Caco-2 (cell line): ENCODE measurements at regions of chr4 and their contacts with region 1.

Region 1: DNA sequence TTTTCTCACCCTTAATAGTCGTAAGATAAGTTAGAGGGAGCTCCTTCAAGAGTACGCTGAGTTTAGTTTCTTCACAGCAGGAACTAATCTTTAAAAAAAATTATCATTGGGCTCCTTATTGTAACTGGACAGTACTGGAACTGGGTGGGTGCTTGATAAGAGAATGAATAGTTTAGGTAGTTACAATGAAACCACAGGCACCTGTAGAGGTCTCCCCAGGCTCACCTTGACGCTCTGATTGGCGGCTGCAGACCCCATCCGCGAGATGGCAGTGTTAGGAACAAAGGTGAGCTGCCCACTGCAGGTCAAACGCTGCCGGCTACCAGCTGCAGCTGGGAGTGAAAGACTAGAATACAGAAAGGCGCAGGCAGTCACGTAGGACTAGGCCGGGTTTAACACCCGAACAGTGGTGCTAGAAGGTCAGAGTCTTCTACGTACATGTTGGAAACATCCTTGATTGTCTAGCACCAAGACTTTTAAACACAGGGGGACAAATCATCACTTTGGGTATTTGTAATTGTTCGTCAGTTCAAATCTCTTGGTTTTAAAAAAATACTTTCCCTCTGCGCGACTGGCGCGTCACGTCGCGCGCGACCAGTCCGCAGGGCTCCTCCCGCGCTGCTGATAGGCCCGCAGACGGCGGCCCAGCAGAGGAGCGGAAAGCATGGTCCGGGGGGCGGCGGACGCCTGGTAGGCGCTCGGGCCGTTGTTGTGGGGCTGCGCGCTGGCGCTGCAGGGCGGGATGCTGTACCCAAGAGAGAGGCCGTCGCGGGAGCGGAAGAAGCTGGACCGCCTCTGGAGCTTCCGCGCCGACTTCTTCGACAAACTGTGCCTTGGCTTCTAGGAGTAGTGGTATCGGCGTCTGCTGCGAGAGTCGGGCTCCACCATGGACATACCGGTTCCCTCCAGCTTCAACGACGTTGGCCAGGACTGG is 45.6 kb downstream of the SMARCA5 start:
- DNase-seq: peak; percentile 91 to 92
- H3K4me3 ChIP-seq: peak overlapping the region; percentile 39
- H3K4me3 Mint-ChIP-seq: peak overlapping the region; percentile 81
- H3K27ac Mint-ChIP-seq: peak overlapping the region; percentile 90
- H3K4me1 ChIP-seq: no peaks in the 10 kb centered on the region
- H3K4me1 Mint-ChIP-seq: no peaks in the 10 kb centered on the region
- H3K27me3 ChIP-seq: no peaks in the 10 kb centered on the region
- H3K27me3 Mint-ChIP-seq: no peaks in the 10 kb centered on the region
- CTCF ChIP-seq: peak; percentile 60 to 94

Region 2: DNA sequence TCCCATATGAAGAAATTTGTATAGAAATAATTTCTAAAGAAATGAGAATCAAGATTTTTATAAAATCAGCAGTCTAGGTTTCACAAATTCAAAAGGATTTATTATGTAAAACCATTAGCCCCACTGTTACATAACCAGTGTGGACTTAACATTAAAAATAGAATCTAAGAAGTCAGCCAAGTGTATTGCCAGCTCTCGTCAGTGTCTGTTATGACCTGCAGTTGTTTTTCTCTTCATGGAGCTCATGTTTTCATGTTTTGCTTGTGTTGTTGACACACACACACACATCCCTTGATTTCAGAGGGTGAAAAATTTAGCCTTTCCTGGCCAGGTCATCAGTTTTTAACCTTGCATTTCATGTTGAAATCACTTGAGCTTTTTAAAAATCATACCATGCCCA is 334.8 kb before region 1 on chr4:
- CTCF ChIA-PET with region 1: no interaction called
- POLR2A ChIA-PET with region 1: no interaction called
- intact Hi-C with region 1: loop called (anchors 1 kb)
- DNase-seq: peak in 1 of 2 experiments; percentile 2
- H3K4me3 ChIP-seq: no peak overlapping the region
- H3K4me3 Mint-ChIP-seq: peak overlapping the region; percentile 62
- H3K27ac Mint-ChIP-seq: peak overlapping the region; percentile 94
- H3K4me1 ChIP-seq: peaks cover 49% of the 10 kb centered on the region
- H3K4me1 Mint-ChIP-seq: peaks cover 20% of the 10 kb centered on the region
- H3K27me3 ChIP-seq: no peaks in the 10 kb centered on the region
- H3K27me3 Mint-ChIP-seq: no peaks in the 10 kb centered on the region
- CTCF ChIP-seq: no peak

Region 3: GRCh38 chr4:143513306-143514168 is 45.6 kb before region 1 on chr4 and contains the start of gene SMARCA5:
- CTCF ChIA-PET with region 1: interaction called, 3 read pairs
- POLR2A ChIA-PET with region 1: interaction called, 6 read pairs
- intact Hi-C with region 1: loop called (anchors 1 kb)
- DNase-seq: peak; percentile 96 to 98
- H3K4me3 ChIP-seq: peak within 1 kb of the TSS; percentile 97
- H3K4me3 Mint-ChIP-seq: peak within 1 kb of the TSS; percentile 96
- H3K27ac Mint-ChIP-seq: peak within 1 kb of the TSS; percentile 96
- H3K4me1 ChIP-seq: 0 out of 2 replicates have a peak, but pooled peaks cover 10% of the 10 kb centered on the region
- H3K4me1 Mint-ChIP-seq: peaks cover 6% of the 10 kb centered on the region
- H3K27me3 ChIP-seq: no peaks in the 10 kb centered on the region
- H3K27me3 Mint-ChIP-seq: no peaks in the 10 kb centered on the region
- CTCF ChIP-seq: no peak
- total RNA-seq, gene SMARCA5: 64.5 and 64.8 TPM in 2 replicates

Region 4: DNA sequence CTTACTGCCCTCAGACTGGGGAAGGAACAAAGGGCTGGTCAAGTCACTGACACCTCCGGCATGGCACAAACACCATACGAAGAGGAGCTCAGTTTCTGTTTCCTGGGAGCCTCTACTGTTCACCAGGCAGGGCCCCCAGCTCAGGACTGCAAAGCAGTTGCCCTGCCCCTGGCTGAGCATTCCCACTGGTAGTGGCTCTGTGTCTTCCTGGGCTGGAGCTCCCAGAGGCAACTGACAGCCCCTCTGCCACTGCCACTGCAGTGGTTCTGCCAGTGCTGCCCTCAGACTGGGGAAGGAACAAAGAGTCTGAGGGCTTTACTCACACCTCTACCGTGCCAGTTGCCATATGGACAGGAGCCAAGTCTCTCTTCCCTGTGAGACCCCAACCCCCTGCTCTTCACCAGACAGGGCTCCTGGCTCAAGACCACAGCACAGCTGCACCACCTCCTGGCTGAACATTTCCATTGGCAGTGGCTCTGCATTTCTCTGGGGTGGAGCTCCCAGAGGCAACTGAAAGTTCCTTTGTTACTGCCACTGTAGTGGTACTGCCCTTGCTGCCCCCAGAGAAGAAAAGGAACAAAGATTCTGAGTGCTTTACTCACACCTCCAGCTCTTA is 22.3 kb after region 1 on chr4:
- CTCF ChIA-PET with region 1: interaction called, 19 read pairs
- POLR2A ChIA-PET with region 1: no interaction called
- intact Hi-C with region 1: loop called (anchors 1 kb)
- DNase-seq: peak in 1 of 2 experiments; percentile 8
- H3K4me3 ChIP-seq: no peak overlapping the region
- H3K4me3 Mint-ChIP-seq: no peak overlapping the region
- H3K27ac Mint-ChIP-seq: no peak overlapping the region
- H3K4me1 ChIP-seq: peaks cover 8% of the 10 kb centered on the region
- H3K4me1 Mint-ChIP-seq: no peaks in the 10 kb centered on the region
- H3K27me3 ChIP-seq: no peaks in the 10 kb centered on the region
- H3K27me3 Mint-ChIP-seq: no peaks in the 10 kb centered on the region
- CTCF ChIP-seq: peak in 1 of 2 experiments; percentile 15

Region 5: GRCh38 chr4:143700416-143701352 is 141.6 kb after region 1 on chr4 and contains the start of gene FREM3:
- CTCF ChIA-PET with region 1: interaction called, 3 read pairs
- POLR2A ChIA-PET with region 1: no interaction called
- intact Hi-C with region 1: loop called (anchors 5 kb)
- DNase-seq: no peak
- H3K4me3 ChIP-seq: no peak within 1 kb of the TSS
- H3K4me3 Mint-ChIP-seq: peak within 1 kb of the TSS; percentile 60
- H3K27ac Mint-ChIP-seq: no peak within 1 kb of the TSS
- H3K4me1 ChIP-seq: no peaks in the 10 kb centered on the region
- H3K4me1 Mint-ChIP-seq: no peaks in the 10 kb centered on the region
- H3K27me3 ChIP-seq: no peaks in the 10 kb centered on the region
- H3K27me3 Mint-ChIP-seq: peaks cover 6% of the 10 kb centered on the region
- CTCF ChIP-seq: no peak
- total RNA-seq, gene FREM3: not detected in 2 replicates

Region 6: GRCh38 chr4:144141493-144141892 is 582.4 kb after region 1 on chr4:
- CTCF ChIA-PET with region 1: no interaction called
- POLR2A ChIA-PET with region 1: no interaction called
- intact Hi-C with region 1: loop called (anchors 2 kb)
- DNase-seq: no peak
- H3K4me3 ChIP-seq: no peak overlapping the region
- H3K4me3 Mint-ChIP-seq: no peak overlapping the region
- H3K27ac Mint-ChIP-seq: no peak overlapping the region
- H3K4me1 ChIP-seq: no peaks in the 10 kb centered on the region
- H3K4me1 Mint-ChIP-seq: no peaks in the 10 kb centered on the region
- H3K27me3 ChIP-seq: no peaks in the 10 kb centered on the region
- H3K27me3 Mint-ChIP-seq: peaks cover 12% of the 10 kb centered on the region
- CTCF ChIP-seq: no peak